ENCODE measurements at regions of chr14 and their contacts with region 1.

Region 1: DNA sequence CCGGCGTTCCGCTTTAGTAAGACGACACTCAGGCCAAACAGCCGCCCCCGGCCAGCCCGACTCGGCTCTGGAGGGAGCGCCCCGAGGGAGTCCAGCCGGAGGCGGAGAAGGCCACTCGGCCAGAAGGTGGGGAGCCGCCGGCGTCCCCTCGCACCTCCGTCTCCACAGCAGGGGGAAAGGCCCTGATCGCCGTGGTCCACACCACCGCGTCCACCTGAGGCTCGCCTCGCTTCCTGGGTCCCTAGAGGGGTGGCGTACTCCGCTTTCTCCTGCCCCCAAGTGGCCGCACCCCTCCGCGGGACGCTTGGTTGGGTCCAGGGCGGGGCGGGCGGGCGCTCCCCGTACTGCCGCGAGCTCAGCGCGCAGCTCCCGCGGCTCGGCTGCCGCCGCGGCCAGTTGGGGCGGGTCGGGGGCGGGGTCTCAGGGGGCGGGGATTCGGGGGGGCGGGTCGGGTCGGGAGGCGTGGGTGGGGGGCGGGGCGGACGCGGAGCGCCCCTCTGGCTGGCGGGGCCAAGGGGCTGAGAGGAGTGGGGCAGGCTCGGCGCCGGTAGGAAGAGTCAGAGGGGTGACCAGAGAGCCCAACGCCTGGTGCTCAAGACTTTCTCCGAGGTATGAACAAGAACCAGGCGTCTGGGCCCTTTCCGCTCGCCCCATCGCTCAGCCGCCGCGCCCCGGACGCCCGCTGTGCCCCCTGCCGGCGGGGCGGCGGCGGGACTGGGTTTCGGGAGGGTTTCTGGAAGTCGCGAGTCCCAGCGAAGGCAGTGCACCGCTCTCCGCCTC is at the start of gene FRMD6:
- DNase-seq: peak; percentile 88
- H3K4me3 ChIP-seq: peak within 1 kb of the TSS; percentile 89 to 94 (median 91)
- H3K27ac ChIP-seq: peak within 1 kb of the TSS; percentile 85
- H3K4me1 ChIP-seq: peaks cover 16% of the 10 kb centered on the region
- H3K27me3 ChIP-seq: no peaks in the 10 kb centered on the region
- CTCF ChIP-seq: peak; percentile 51 to 83
- total RNA-seq, gene FRMD6: 191 to 302 TPM

Region 2: DNA sequence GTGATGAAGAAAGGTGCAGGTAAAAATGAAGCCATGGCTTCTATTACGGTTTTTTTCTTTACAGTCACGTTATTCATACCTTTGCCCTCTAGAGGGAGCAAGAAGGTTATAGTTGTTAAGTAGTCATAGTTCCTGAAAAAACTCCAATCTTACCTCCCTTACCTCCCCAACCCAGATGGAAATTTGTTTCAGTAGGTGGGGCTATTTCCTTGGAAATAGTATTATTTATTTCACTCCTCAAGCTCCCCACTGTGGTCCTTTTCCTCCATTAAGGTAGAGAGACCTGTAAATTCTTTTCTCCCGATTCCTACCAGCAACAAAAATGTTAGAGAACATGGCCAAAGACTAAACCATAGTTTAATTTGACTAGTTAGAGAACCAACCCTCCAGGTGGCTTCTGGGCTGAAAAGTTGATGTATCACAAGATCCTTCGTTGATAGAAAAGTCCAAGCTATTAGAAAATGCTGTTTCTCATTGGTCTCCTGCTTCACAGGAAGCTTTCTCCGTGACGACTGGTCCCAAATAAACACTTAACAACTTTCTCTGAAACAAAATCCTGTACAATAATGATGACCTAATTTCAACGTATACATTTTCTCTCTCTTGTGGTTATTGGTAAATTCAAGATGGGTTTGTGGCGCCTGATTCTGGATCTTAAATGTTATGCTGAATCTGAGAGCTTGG is 368.0 kb before region 1 on chr14:
- CTCF ChIA-PET with region 1: interaction called, 7 read pairs
- dilution Hi-C with region 1: no loop called
- in situ Hi-C with region 1: no loop called
- intact Hi-C with region 1: loop called (anchors 1 kb)
- DNase-seq: peak; percentile 78
- H3K4me3 ChIP-seq: no peak overlapping the region
- H3K27ac ChIP-seq: no peak overlapping the region
- H3K4me1 ChIP-seq: peaks cover 9% of the 10 kb centered on the region
- H3K27me3 ChIP-seq: no peaks in the 10 kb centered on the region
- CTCF ChIP-seq: peak; percentile 67 to 84

Region 3: DNA sequence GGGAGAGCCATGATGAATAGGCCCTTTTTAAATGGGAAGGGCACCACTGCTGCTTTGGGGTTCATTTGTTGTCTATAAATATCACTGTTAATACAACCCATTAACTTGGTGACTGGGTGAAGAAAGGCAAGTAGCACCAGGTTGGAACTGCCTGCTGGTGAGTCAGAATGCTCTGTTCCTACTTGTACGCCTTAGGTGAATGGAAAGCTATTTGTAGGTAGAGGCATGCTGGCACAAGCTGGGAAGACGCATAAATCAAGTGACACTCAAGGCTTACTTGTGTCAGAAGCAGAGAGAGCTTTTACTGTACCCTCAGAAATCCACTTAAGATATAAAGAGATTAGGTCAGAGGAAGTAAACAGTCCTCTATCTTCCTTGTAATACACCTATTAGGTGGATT is 269.1 kb before region 1 on chr14:
- CTCF ChIA-PET with region 1: no interaction called
- dilution Hi-C with region 1: no loop called
- in situ Hi-C with region 1: no loop called
- intact Hi-C with region 1: loop called (anchors 5 kb)
- DNase-seq: peak; percentile 99
- H3K4me3 ChIP-seq: no peak overlapping the region
- H3K27ac ChIP-seq: peak overlapping the region; percentile 92
- H3K4me1 ChIP-seq: peaks cover 49% of the 10 kb centered on the region
- H3K27me3 ChIP-seq: no peaks in the 10 kb centered on the region
- CTCF ChIP-seq: no peak

Region 4: GRCh38 chr14:51547260-51547659 is 104.3 kb before region 1 on chr14:
- CTCF ChIA-PET with region 1: no interaction called
- dilution Hi-C with region 1: no loop called
- in situ Hi-C with region 1: no loop called
- intact Hi-C with region 1: loop called (anchors 5 kb)
- DNase-seq: peak; percentile 99
- H3K4me3 ChIP-seq: peak overlapping the region in 1 of 3 experiments; percentile 8
- H3K27ac ChIP-seq: peak overlapping the region; percentile 96
- H3K4me1 ChIP-seq: peaks cover 60% of the 10 kb centered on the region
- H3K27me3 ChIP-seq: no peaks in the 10 kb centered on the region
- CTCF ChIP-seq: no peak

Region 5: DNA sequence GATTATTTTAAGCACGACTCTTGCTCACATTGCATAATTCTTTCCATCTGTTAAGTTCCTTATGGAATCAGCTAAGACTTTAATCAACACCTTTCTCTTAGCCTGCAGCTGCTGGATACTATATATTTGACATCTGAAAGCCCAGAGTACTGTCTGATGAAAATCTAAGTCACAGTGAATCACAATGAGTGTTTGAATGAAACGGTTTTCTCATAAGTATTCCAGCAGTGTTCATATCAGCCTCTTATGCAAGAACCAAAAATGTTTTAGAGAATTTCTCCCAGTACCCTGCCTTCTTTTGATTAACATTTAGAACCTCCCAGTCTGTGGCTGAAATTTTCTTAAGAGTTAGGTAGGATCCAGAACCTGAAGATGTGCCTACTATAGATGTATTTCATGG is 55.7 kb after region 1 on chr14:
- CTCF ChIA-PET with region 1: no interaction called
- dilution Hi-C with region 1: no loop called
- in situ Hi-C with region 1: no loop called
- intact Hi-C with region 1: no loop called
- DNase-seq: no peak
- H3K4me3 ChIP-seq: no peak overlapping the region
- H3K27ac ChIP-seq: no peak overlapping the region
- H3K4me1 ChIP-seq: no peaks in the 10 kb centered on the region
- H3K27me3 ChIP-seq: no peaks in the 10 kb centered on the region
- CTCF ChIP-seq: no peak

Region 6: GRCh38 chr14:51726166-51726899 is 74.8 kb after region 1 on chr14:
- CTCF ChIA-PET with region 1: no interaction called
- dilution Hi-C with region 1: no loop called
- in situ Hi-C with region 1: no loop called
- intact Hi-C with region 1: loop called (anchors 2 kb)
- DNase-seq: no peak
- H3K4me3 ChIP-seq: no peak overlapping the region
- H3K27ac ChIP-seq: no peak overlapping the region
- H3K4me1 ChIP-seq: peaks cover 8% of the 10 kb centered on the region
- H3K27me3 ChIP-seq: no peaks in the 10 kb centered on the region
- CTCF ChIP-seq: no peak